ENCODE measurements at regions of chr2 and their contacts with region 1.

Region 1: DNA sequence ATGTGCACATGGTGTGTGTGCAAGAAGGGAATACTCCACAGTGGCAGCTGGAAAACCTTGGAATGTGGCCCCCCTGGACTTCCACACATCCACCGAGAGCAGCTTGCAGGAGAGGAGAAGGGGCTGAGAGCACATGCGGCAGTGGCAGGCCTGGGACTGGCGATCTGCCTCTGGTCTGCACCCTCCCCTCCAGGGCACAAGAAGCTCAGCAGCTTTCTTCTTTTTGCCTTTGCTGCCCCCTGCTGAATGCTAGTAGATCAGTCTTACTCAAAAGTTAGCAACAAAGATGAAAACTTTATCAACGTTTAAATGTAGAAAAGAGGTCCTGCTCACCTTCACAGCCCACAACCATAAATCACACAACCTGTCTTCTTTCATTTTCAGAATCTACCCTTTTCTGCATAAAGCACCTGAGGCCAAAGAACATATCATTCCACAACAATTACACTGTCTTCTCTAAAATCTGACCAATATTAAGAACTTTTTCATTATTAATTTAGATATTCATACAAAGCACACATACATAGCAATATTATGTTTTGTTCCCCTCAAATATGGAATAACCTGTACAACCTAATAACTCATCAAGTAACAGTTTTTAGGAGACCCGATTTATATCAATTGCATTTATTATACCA is 34.6 kb downstream of the TGFBRAP1 start:
- DNase-seq: peak; percentile 75
- ATAC-seq: peak; percentile 93
- H3K4me3 Mint-ChIP-seq: no peak overlapping the region
- H3K27ac Mint-ChIP-seq: no peak overlapping the region
- H3K4me1 Mint-ChIP-seq: no peaks in the 10 kb centered on the region
- H3K27me3 Mint-ChIP-seq: no peaks in the 10 kb centered on the region
- CTCF ChIP-seq: peak; percentile 36; the same call in 1 of the 2 replicates

Region 2: DNA sequence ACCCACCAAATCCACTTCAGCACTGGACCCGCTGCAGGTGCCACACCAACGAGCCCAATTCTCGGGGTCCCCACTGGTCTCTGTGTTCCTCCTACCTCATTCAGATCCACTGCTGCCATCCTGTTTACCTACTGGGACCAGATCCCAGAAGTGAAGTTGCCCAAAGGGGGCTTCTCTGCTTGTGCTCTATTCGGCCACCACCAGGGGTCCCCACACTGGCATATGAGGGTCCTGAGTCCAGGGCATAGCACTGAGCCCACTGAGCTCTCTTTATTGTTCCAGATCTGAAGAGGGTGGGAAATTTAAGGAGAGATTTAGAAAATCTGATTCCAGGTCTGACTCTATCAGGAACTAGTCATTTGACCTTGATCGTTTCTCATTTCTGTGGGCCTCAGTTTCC is 51.0 kb before region 1 on chr2:
- CTCF ChIA-PET with region 1: interaction called, 12 read pairs
- POLR2A ChIA-PET with region 1: no interaction called
- DNase-seq: peak; percentile 67
- ATAC-seq: peak; percentile 93
- H3K4me3 Mint-ChIP-seq: no peak overlapping the region
- H3K27ac Mint-ChIP-seq: no peak overlapping the region
- H3K4me1 Mint-ChIP-seq: peaks cover 3% of the 10 kb centered on the region
- H3K27me3 Mint-ChIP-seq: peaks cover 2% of the 10 kb centered on the region; the same call in 1 of the 2 replicates
- CTCF ChIP-seq: peak; percentile 69

Region 3: GRCh38 chr2:105309147-105309545 is 14.2 kb after region 1 on chr2:
- CTCF ChIA-PET with region 1: interaction called, 10 read pairs
- POLR2A ChIA-PET with region 1: no interaction called
- DNase-seq: no peak
- ATAC-seq: peak; percentile 30
- H3K4me3 Mint-ChIP-seq: no peak overlapping the region
- H3K27ac Mint-ChIP-seq: peak overlapping the region; percentile 77
- H3K4me1 Mint-ChIP-seq: peaks cover 19% of the 10 kb centered on the region
- H3K27me3 Mint-ChIP-seq: no peaks in the 10 kb centered on the region
- CTCF ChIP-seq: no peak

Region 4: DNA sequence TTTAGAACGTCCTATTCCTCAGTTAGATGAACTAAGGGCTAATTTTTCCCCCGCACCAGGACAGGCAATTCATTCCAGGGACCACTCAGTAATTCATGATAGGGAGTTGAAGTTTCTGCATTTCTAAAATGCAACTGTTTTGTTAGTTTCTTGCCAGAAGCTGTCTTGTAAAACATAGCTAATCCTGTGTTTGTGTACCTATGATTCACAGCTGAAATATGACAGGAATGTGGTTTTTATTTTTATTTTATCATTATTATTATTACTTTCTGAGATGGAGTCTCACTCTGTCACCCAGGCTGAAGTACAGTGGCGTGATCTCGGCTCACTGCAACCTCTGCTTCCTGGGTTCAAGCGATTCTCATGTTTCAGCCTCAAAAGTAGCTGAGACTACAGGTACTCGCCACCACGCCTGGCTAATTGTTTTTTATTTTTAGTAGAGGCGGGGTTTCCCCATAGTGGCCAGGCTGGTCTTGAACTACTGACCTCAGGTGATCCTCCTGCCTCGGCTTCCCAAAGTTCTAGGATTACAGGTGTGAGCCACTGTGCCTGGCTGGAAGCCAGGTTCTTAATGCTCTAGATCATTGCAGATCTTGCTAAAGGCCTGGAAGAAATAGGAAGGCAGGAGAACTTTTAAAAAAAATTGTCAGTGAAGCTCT is 258.7 kb after region 1 on chr2:
- CTCF ChIA-PET with region 1: no interaction called
- POLR2A ChIA-PET with region 1: no interaction called
- DNase-seq: no peak
- ATAC-seq: no peak
- H3K4me3 Mint-ChIP-seq: no peak overlapping the region
- H3K27ac Mint-ChIP-seq: no peak overlapping the region
- H3K4me1 Mint-ChIP-seq: no peaks in the 10 kb centered on the region; the same call in 1 of the 2 replicates
- H3K27me3 Mint-ChIP-seq: no peaks in the 10 kb centered on the region
- CTCF ChIP-seq: no peak